ENCODE measurements at regions of chr2 and their contacts with region 1.

Region 1: DNA sequence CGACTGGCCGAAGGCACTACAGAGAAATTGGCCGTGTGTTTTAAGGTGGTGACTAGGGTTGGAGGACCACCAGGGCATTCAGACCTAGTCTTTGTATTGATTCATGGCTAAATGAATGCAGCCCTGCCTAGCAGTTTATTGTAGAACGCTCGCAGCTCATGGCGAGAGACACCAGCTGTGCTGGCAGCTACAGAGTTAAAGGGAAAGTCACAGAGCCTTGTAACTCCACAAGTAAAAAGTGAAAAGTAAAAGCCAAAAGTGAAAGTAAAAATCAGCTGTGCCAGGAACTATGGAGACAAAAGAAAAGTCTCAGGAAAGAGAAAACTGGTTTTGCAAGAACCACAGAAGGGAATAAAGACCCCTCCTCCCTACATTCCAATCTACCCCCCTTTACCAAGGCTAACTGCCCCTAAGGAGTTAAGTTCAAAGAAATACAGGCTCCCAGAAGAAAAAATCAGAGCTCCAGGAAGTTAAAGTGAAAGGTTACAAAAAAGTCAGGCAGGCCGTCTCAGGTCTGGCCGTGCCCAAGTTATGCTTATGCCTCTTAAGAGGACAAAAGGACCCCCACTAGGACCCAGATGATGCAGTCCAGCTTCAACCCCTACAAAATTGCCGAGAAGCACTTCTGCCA is 46.4 kb upstream of the SELENOI start:
- DNase-seq: peak; percentile 60
- H3K4me3 ChIP-seq: peak overlapping the region; percentile 40 to 54 (median 45)
- H3K27ac ChIP-seq: peak overlapping the region; percentile 60
- H3K4me1 ChIP-seq: peaks cover 39% of the 10 kb centered on the region
- H3K27me3 ChIP-seq: no peaks in the 10 kb centered on the region
- CTCF ChIP-seq: no peak

Region 2: DNA sequence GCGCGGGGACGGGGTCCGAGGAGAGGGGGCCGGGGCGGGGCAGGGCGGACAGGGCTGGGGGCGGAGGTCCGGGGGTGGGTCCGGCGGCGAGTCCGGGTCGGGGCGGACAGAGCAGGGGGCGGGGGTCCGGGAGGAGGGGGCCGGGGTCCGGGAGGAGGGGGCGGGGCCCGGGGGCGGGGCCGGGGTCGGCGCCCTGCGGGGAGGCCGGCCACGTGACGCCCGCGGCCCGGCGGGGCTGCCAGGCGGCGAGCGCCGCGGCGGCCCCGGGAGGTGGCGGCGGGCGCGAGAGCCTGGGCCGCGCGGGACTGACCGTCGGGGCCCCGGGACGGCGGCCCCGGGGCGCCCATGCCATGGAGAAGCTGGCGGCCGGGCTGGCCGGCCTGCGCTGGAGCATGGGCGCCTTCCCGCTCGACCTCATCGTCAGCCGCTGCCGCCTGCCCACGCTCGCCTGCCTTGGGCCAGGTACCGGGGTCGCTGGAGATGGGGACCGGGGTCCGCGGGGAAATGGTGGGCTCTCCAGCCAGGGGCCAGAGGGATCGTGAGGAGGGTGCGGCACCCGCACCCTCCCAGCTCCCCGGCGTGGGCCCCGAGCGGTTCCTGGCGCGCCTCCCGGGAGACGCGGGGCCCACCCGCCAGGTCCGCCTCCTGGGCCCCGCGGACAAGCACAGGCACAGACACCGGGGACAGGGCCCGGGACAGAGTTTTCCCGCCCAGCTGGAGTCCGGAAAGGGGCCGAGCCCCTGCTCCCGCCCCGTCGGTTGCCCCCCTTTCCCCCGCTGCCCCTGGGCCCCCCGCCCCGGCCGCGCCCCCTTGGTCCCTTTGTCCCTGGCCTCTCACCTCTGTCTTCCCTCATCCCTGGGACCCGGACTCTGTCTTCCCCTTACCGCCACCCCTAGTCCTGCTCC is 126.5 kb before region 1 on chr2 and contains the start of gene GAREM2:
- CTCF ChIA-PET with region 1: no interaction called
- dilution Hi-C with region 1: no loop called
- in situ Hi-C with region 1: no loop called
- intact Hi-C with region 1: no loop called
- DNase-seq: no peak
- H3K4me3 ChIP-seq: peak within 1 kb of the TSS; percentile 21 to 42 (median 38)
- H3K27ac ChIP-seq: no peak within 1 kb of the TSS
- H3K4me1 ChIP-seq: no peaks in the 10 kb centered on the region
- H3K27me3 ChIP-seq: peaks cover 6% of the 10 kb centered on the region
- CTCF ChIP-seq: no peak
- total RNA-seq, gene GAREM2: 0.16 to 0.67 TPM

Region 3: DNA sequence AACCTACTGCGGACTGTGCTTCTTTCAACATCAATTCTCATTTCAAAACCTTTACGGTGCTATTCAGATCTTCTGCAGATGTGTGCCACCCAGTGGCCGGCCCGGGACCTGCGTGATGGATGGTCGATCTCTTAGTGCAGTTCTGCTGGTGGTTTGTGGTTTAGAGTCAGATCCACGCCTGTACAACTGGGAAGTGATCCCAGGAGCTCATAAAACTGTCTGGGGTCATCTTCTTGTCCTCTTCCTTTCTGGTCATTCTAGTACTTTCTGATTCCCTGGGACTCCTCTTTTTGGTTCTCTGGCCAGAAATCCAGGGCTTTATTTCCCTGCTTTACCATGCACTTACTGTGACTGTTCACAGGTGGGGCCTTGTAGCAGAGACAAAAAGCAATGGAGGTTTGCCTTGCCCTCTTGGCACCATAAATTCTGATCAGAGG is 30.5 kb after region 1 on chr2:
- CTCF ChIA-PET with region 1: no interaction called
- dilution Hi-C with region 1: no loop called
- in situ Hi-C with region 1: no loop called
- intact Hi-C with region 1: loop called (anchors 1 kb)
- DNase-seq: peak; percentile 76
- H3K4me3 ChIP-seq: no peak overlapping the region
- H3K27ac ChIP-seq: no peak overlapping the region
- H3K4me1 ChIP-seq: peaks cover 10% of the 10 kb centered on the region
- H3K27me3 ChIP-seq: no peaks in the 10 kb centered on the region
- CTCF ChIP-seq: peak; percentile 94 to 95